ENCODE measurements at regions of chr7 and their contacts with region 1.

Region 1: DNA sequence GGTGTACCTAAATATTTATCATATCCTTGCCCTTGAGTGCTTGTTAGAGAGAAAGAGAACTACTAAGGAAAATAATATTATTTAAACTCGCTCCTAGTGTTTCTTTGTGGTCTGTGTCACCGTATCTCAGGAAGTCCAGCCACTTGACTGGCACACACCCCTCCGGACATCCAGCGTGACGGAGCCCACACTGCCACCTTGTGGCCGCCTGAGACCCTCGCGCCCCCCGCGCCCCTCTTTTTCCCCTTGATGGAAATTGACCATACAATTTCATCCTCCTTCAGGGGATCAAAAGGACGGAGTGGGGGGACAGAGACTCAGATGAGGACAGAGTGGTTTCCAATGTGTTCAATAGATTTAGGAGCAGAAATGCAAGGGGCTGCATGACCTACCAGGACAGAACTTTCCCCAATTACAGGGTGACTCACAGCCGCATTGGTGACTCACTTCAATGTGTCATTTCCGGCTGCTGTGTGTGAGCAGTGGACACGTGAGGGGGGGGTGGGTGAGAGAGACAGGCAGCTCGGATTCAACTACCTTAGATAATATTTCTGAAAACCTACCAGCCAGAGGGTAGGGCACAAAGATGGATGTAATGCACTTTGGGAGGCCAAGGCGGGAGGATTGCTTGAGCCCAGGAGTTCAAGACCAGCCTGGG is 11.4 kb downstream of the SERPINE1 start:
- DNase-seq: peak; percentile 98
- H3K4me3 Mint-ChIP-seq: peak overlapping the region; percentile 68
- H3K27ac Mint-ChIP-seq: peak overlapping the region; percentile 89
- H3K4me1 Mint-ChIP-seq: peaks cover 50% of the 10 kb centered on the region
- H3K27me3 Mint-ChIP-seq: no peaks in the 10 kb centered on the region
- CTCF ChIP-seq: peak; percentile 93

Region 2: DNA sequence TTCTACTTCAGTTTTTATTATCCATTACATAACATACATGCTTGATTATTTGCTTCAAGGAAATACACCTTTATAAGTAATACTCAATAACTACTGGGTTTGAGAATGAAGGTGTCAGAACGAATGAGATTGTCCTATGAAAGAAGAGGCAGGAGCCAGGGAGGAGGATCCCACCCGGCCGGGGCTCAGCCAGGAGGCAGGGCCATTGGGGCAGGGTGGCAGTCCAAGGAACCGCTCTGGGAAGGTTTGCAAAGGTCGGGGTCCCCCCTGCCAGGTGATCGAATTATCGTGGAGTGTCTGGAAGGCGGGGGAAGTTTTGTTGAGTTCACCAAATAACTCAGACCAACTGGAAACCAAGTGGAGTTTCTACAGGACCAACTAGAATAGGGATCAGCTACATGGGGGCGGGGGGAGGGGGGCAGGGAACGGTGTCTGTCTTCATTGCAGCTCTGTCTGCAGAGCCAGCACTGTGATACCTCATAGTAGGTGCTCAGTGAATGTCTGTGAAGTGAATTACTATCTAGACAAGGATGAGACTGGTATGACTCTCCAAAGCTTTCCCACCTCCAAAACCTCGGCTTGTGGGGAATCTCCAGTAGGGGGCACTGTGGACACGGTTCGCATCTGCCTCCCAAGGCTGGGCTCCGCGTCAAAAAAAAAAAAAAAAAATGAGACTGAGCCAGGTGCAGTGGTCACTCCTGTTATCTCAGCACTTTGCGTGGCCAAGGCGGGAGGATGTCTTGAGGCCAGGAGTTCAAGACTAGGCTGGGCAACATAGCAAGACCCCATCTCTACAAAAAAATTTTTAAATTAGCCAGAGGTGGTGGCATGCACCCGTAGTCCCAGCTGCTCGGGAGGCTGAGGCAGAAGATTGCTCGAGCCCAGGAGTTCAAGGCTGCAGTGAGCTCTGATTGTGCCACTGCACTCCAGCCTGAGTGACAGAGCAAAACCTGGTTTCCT is 43.6 kb before region 1 on chr7:
- CTCF ChIA-PET with region 1: interaction called, 12 read pairs
- POLR2A ChIA-PET with region 1: interaction called, 4 read pairs
- intact Hi-C with region 1: loop called (anchors 1 kb)
- DNase-seq: peak; percentile 77
- H3K4me3 Mint-ChIP-seq: no peak overlapping the region
- H3K27ac Mint-ChIP-seq: peak overlapping the region; percentile 55
- H3K4me1 Mint-ChIP-seq: peaks cover 18% of the 10 kb centered on the region
- H3K27me3 Mint-ChIP-seq: no peaks in the 10 kb centered on the region
- CTCF ChIP-seq: peak; percentile 74

Region 3: DNA sequence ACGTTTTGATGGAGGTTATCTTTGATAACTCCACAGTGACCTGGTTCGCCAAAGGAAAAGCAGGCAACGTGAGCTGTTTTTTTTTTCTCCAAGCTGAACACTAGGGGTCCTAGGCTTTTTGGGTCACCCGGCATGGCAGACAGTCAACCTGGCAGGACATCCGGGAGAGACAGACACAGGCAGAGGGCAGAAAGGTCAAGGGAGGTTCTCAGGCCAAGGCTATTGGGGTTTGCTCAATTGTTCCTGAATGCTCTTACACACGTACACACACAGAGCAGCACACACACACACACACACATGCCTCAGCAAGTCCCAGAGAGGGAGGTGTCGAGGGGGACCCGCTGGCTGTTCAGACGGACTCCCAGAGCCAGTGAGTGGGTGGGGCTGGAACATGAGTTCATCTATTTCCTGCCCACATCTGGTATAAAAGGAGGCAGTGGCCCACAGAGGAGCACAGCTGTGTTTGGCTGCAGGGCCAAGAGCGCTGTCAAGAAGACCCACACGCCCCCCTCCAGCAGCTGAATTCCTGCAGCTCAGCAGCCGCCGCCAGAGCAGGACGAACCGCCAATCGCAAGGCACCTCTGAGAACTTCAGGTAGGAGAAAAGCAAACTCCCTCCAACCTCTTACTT is 11.6 kb before region 1 on chr7 and contains the start of gene SERPINE1:
- CTCF ChIA-PET with region 1: interaction called, 6 read pairs
- POLR2A ChIA-PET with region 1: interaction called, 24 read pairs
- intact Hi-C with region 1: no loop called
- DNase-seq: peak; percentile 99
- H3K4me3 Mint-ChIP-seq: peak within 1 kb of the TSS; percentile 76
- H3K27ac Mint-ChIP-seq: peak within 1 kb of the TSS; percentile 85
- H3K4me1 Mint-ChIP-seq: peaks cover 49% of the 10 kb centered on the region
- H3K27me3 Mint-ChIP-seq: no peaks in the 10 kb centered on the region
- CTCF ChIP-seq: peak; percentile 37
- total RNA-seq, gene SERPINE1: 56.7 and 80.6 TPM in 2 replicates

Region 4: GRCh38 chr7:101165075-101165957 is 27.0 kb after region 1 on chr7 and contains the start of gene VGF:
- CTCF ChIA-PET with region 1: interaction called, 31 read pairs
- POLR2A ChIA-PET with region 1: interaction called, 4 read pairs
- intact Hi-C with region 1: no loop called
- DNase-seq: peak; percentile 96
- H3K4me3 Mint-ChIP-seq: peak within 1 kb of the TSS; percentile 74
- H3K27ac Mint-ChIP-seq: no peak within 1 kb of the TSS
- H3K4me1 Mint-ChIP-seq: peaks cover 41% of the 10 kb centered on the region
- H3K27me3 Mint-ChIP-seq: peaks cover 52% of the 10 kb centered on the region
- CTCF ChIP-seq: no peak
- total RNA-seq, gene VGF: 11.2 and 12.8 TPM in 2 replicates

Region 5: GRCh38 chr7:101185258-101185839 is 47.0 kb after region 1 on chr7:
- CTCF ChIA-PET with region 1: interaction called, 203 read pairs
- POLR2A ChIA-PET with region 1: interaction called, 4 read pairs
- intact Hi-C with region 1: no loop called
- DNase-seq: no peak
- H3K4me3 Mint-ChIP-seq: no peak overlapping the region
- H3K27ac Mint-ChIP-seq: no peak overlapping the region
- H3K4me1 Mint-ChIP-seq: peaks cover 12% of the 10 kb centered on the region
- H3K27me3 Mint-ChIP-seq: peaks cover 7% of the 10 kb centered on the region
- CTCF ChIP-seq: no peak

Region 6: GRCh38 chr7:101217388-101218235 is 79.3 kb after region 1 on chr7 and contains the starts of genes PLOD3 and ZNHIT1:
- CTCF ChIA-PET with region 1: interaction called, 23 read pairs
- POLR2A ChIA-PET with region 1: interaction called, 11 read pairs
- intact Hi-C with region 1: no loop called
- DNase-seq: peak; percentile 99
- H3K4me3 Mint-ChIP-seq: peak within 1 kb of the TSS; percentile 99
- H3K27ac Mint-ChIP-seq: peak within 1 kb of the TSS; percentile 94
- H3K4me1 Mint-ChIP-seq: peaks cover 29% of the 10 kb centered on the region
- H3K27me3 Mint-ChIP-seq: no peaks in the 10 kb centered on the region
- CTCF ChIP-seq: no peak
- total RNA-seq, gene PLOD3: 125 and 134 TPM in 2 replicates
- total RNA-seq, gene ZNHIT1: 63.9 and 70.9 TPM in 2 replicates

Region 7: DNA sequence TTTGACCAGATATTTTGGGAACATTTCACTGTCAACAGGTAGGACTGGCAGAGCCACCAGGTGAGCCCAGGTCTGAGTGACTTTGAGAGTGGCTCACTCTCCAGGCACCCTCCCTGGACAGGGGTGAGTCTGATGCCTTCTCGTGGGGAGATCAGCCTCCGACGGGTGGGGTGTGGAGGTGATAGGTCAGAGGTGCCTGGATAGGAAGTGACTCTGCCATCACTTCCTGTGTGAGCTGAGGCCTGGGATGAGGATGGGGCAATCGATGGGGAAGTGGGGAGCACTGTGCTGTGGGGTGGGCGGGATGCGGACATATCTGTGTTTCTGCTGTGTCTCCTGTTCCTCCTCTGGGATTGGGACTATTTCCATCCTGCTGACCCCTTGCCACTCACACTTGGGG is 148.7 kb after region 1 on chr7:
- CTCF ChIA-PET with region 1: interaction called, 45 read pairs
- POLR2A ChIA-PET with region 1: interaction called, 8 read pairs
- intact Hi-C with region 1: no loop called
- DNase-seq: no peak
- H3K4me3 Mint-ChIP-seq: no peak overlapping the region
- H3K27ac Mint-ChIP-seq: no peak overlapping the region
- H3K4me1 Mint-ChIP-seq: peaks cover 10% of the 10 kb centered on the region
- H3K27me3 Mint-ChIP-seq: peaks cover 36% of the 10 kb centered on the region
- CTCF ChIP-seq: no peak